Right ventricle myocardium inferior (tissue), 1 donor: ENCODE measurements at regions of chr10 and their contacts with region 1.

Region 1: GRCh38 chr10:72273410-72274212 is at the start of gene DDIT4:
- DNase-seq: peak; percentile 100
- ATAC-seq: peak; percentile 93
- total RNA-seq, gene DDIT4: 71.4 TPM

Region 2: GRCh38 chr10:71748671-71749191 is 524.9 kb before region 1 on chr10:
- intact Hi-C with region 1: no loop called
- DNase-seq: peak; percentile 93
- ATAC-seq: peak; percentile 63

Region 3: GRCh38 chr10:72215652-72216549 is 57.7 kb before region 1 on chr10 and contains the starts of genes ANAPC16 and ASCC1:
- intact Hi-C with region 1: loop called (anchors 2 kb)
- DNase-seq: peak; percentile 96
- ATAC-seq: peak; percentile 98
- total RNA-seq, gene ANAPC16: 239 TPM
- total RNA-seq, gene ASCC1: 35.4 TPM

Region 4: GRCh38 chr10:72242675-72243074 is 30.9 kb before region 1 on chr10:
- intact Hi-C with region 1: no loop called
- DNase-seq: peak; percentile 76
- ATAC-seq: peak; percentile 75

Region 5: DNA sequence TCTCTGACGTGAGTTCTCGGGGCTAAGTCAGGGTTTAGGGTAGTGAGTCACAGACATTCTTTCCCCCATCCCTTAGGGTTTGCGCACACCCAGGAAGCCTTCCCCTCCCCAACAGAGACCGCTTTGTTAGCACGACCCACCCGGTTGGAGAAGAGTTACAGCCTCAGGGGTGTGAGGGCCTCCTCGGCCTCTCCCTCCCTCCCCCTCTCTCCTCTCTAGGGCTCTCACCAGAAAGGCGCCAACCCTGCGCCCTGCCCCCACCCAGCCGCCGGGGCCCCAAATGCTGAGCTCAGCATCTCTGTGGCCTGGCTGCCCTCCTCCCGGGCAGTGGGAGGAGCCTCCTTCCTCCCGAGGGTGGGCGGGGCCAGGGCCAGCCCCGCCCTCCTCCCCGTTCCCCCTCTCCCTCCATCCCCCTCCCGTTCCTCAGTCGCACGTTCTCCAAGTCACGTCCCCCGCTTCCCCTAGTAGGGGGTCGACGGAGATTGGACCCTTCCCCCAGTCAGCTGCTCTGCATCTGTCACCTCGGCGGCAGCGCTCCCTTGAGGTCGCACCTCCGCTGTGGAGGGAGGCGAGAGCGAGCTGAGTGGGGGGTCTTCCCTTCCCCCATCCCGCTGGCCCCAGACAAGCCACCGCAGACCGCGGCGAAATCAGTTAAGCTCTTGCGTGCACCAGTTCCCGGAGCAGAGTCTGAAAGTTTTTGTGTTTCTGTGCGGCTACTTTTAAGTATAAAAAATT is 12.9 kb before region 1 on chr10:
- intact Hi-C with region 1: loop called (anchors 1 kb)
- DNase-seq: peak; percentile 91
- ATAC-seq: peak; percentile 90

Region 6: GRCh38 chr10:72319416-72320254 is 46.0 kb after region 1 on chr10:
- intact Hi-C with region 1: loop called (anchors 5 kb)
- DNase-seq: peak; percentile 98
- ATAC-seq: peak; percentile 87

Region 7: GRCh38 chr10:72334825-72335393 is 61.3 kb after region 1 on chr10:
- intact Hi-C with region 1: loop called (anchors 2 kb)
- DNase-seq: peak; percentile 94
- ATAC-seq: peak; percentile 46